ENCODE measurements at regions of chr9 and their contacts with region 1.

Region 1: DNA sequence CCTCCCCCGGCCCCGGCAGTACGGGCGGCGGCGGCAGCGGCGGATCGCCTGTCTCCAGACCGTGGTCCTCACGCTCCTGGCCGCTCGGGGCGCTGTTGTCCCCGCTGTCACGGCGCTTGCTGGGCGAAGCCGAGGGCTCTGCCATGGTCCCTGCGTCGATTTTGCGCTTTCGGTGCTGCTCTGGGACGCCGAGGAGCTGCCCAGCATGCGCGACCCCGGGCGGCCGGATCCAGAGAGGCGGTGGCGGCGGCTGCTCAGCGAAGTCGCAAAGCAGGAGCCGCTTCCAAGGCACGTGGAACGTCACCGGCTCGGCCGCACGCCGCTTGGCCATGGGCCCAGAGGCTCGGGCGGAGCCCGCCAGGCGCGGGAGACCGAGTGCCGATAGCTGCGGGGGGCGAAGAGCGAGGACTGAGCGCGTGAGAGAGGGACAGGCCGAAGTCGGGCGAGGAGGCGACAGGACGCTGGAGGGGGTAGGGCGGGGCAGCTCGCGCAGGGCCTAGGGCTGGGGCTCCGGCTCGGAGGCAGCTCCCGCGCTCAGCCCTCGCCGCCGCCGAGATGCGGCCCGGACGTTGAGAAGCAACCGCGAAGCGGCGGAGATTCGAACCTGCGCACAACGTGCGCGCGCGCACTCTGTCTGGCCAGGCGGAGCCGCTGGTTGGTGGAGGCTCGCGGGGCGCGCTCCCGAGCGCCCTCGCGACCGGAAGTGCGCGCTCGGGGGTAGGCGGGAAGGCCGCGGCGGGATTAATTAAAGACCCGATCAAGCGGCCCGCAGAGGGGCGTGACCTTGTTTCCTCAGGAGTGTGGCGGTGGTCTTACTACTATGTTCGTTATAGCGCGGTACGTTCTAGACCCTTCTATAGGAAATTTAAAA is at the start of gene C9orf40:
- DNase-seq: peak; percentile 89 to 96 (median 93)
- ATAC-seq: peak; percentile 92 to 99 (median 97)
- H3K4me3 ChIP-seq: peak within 1 kb of the TSS; percentile 50 to 94 (median 84)
- H3K27ac ChIP-seq: peak within 1 kb of the TSS; percentile 74 to 100 (median 95)
- H3K4me1 ChIP-seq: peaks cover 0 to 20% (median 0%) of the 10 kb centered on the region in 12 donors
- H3K27me3 ChIP-seq: no peaks in the 10 kb centered on the region
- CTCF ChIP-seq: peak; percentile 66 to 90 (median 83)
- POLR2A ChIP-seq: no peak
- total RNA-seq, gene C9orf40: 1.4 to 2.7 (median 1.8) TPM

Region 2: DNA sequence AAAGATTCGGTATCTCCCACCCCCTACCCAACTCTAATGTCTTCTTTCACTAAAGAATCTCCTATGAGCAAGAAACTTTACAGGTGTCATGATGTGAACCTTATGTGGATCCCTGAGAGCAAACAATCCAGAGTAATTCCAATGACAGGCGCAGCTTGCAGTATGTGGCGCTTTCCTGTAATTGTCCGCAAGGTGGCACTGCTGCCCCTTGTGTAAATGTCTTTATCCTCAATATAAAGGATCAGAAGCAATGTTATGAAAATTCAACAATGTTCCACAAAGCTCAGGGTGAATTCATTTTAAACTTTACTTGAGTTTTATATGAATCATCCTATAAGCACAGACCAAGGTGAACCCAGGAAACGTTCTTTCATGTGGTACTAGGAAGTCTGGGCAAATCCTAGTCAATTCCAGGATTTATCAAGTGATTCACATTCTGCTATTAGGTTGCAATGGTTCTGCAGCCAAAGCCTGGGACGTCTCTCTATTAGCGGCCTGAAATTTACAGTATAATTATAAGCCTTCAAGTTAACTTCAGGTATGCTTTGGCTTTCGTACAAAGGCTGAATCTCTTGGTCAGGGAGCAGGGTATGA is 178.5 kb before region 1 on chr9:
- intact Hi-C with region 1: loop called in 2 of 10 experiments (anchors 2 kb)
- DNase-seq: peak; percentile 48 to 75 (median 69)
- ATAC-seq: peak in 3 of 4 donors; percentile 75 to 83 (median 77)
- H3K4me3 ChIP-seq: no peak overlapping the region
- H3K27ac ChIP-seq: no peak overlapping the region
- H3K4me1 ChIP-seq: peaks cover 0 to 5% (median 0%) of the 10 kb centered on the region in 12 donors
- H3K27me3 ChIP-seq: peaks cover 0 to 5% (median 0%) of the 10 kb centered on the region in 9 donors
- CTCF ChIP-seq: peak; percentile 80 to 95 (median 90)
- POLR2A ChIP-seq: no peak

Region 3: DNA sequence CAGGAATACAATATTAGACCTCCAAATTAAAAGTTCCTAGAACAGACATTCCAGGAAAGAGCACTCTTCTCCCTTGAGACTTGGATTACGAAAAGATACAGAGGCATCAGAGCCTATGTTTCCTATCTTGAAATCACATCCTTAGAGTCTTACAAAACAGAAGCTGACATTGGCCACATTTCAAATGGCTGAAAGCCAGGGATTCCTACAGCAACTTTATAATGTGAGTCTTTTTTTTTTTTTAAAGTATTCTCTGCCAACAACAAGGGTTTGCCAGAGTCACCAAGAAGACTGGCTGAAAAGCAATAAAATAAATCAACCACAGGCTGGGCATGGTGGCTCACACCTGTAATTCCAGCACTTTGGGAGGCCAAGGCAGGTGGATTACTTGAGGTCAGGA is 127.9 kb before region 1 on chr9:
- intact Hi-C with region 1: loop called in 1 of 10 experiments (anchors 10 kb)
- DNase-seq: peak in 4 of 5 donors; percentile 39 to 65 (median 48)
- ATAC-seq: peak in 3 of 4 donors; percentile 50 to 80 (median 73)
- H3K4me3 ChIP-seq: no peak overlapping the region
- H3K27ac ChIP-seq: no peak overlapping the region
- H3K4me1 ChIP-seq: peaks cover 0 to 6% (median 0%) of the 10 kb centered on the region in 12 donors
- H3K27me3 ChIP-seq: no peaks in the 10 kb centered on the region
- CTCF ChIP-seq: no peak
- POLR2A ChIP-seq: no peak

Region 4: GRCh38 chr9:74887041-74887980 is 65.2 kb before region 1 on chr9 and contains the start of gene TRPM6:
- intact Hi-C with region 1: loop called in 2 of 10 experiments (anchors 5 to 10 kb)
- DNase-seq: peak; percentile 77 to 92 (median 87)
- ATAC-seq: peak; percentile 84 to 96 (median 94)
- H3K4me3 ChIP-seq: peak within 1 kb of the TSS; percentile 32 to 68 (median 62)
- H3K27ac ChIP-seq: peak within 1 kb of the TSS; percentile 66 to 84 (median 74)
- H3K4me1 ChIP-seq: peaks cover 0 to 17% (median 5%) of the 10 kb centered on the region in 12 donors
- H3K27me3 ChIP-seq: peaks cover 0 to 15% (median 6%) of the 10 kb centered on the region in 9 donors
- CTCF ChIP-seq: no peak
- POLR2A ChIP-seq: no peak
- total RNA-seq, gene TRPM6: 0.12 to 0.75 (median 0.48) TPM in 7 of 9 donors, not detected in the others

Region 5: DNA sequence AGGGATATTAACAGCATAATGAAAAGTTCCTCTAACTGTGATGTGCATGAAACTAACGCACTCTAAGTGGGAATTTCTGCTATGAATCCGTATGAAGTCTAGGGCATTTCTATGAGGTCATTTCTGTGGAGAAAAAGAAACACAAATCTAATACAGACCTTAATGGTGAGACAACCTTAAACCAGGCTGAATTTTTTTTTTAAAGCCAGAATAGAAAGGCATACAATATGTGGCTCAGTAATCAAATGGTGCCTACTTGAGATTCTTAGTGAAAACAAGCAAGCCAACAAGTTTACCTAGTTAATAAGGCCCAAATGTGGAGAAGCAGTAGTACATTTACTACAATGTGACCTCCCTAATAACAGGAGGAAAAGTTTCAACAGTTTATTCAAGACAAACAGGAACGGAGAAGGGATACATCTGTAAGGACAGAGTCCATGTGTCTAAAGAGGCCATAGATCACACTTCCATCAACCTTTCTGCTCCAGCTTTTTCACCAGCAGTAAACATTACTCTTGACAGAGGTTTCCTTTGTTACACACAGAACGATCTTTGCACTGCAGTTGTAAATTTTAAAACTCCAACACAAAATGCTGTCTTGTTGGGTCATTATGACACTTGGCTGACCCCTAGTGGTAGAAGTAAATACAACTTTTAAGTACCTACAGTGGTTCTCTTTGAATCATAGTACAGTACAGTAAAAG is 49.4 kb after region 1 on chr9:
- intact Hi-C with region 1: loop called in 4 of 10 experiments (anchors 1 to 10 kb)
- DNase-seq: peak in 1 of 5 donors; percentile 13
- ATAC-seq: peak; percentile 51 to 89 (median 77)
- H3K4me3 ChIP-seq: no peak overlapping the region
- H3K27ac ChIP-seq: no peak overlapping the region
- H3K4me1 ChIP-seq: peaks cover 0 to 4% (median 0%) of the 10 kb centered on the region in 12 donors
- H3K27me3 ChIP-seq: no peaks in the 10 kb centered on the region
- CTCF ChIP-seq: peak; percentile 58 to 86 (median 82)
- POLR2A ChIP-seq: no peak

Region 6: GRCh38 chr9:75027187-75028107 is 74.9 kb after region 1 on chr9:
- intact Hi-C with region 1: loop called in 2 of 10 experiments (anchors 2 to 5 kb)
- DNase-seq: peak; percentile 60 to 85 (median 71)
- ATAC-seq: peak; percentile 38 to 80 (median 68)
- H3K4me3 ChIP-seq: peak overlapping the region; percentile 49 to 93 (median 77)
- H3K27ac ChIP-seq: peak overlapping the region; percentile 80 to 98 (median 94)
- H3K4me1 ChIP-seq: peaks cover 0 to 28% (median 13%) of the 10 kb centered on the region in 12 donors
- H3K27me3 ChIP-seq: no peaks in the 10 kb centered on the region
- CTCF ChIP-seq: peak in 2 of 12 donors; percentile 6 to 14
- POLR2A ChIP-seq: no peak

Region 7: DNA sequence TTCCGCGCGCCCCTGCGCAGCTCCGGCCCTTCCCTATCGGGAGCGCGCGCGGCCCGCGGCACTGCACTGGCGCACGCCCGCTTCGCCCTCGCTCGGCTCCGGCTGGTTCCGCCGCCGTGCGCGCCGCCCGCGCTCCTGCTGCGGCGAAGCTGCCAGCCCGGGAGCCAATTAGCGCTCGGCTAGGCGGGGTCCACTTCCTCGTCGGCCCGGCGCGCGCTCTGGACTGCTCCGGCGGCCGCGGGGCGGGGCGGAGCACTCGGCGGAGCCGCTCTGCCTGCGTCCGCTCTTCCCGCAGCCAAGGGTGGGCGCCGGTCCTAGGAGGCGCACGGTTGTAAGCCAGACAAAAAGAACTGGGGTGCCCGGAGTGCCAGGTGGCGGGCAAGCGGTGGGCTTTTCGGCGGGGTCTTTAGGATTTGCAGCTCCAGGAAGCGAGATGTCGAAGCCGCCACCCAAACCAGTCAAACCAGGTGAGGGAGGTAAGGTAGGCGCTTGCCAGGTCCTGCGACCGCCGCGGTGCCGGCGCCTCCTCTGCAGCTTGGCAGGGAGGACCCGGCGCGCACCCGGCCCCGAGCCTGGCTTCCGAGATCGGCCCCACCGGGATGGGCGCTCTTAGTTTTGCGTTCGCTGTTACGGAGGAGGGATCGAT is 135.9 kb after region 1 on chr9 and contains the start of gene OSTF1:
- intact Hi-C with region 1: loop called in 6 of 10 experiments (anchors 5 to 10 kb)
- DNase-seq: peak; percentile 97 to 98 (median 97)
- ATAC-seq: peak; percentile 91 to 98 (median 94)
- H3K4me3 ChIP-seq: peak within 1 kb of the TSS; percentile 78 to 99 (median 95)
- H3K27ac ChIP-seq: peak within 1 kb of the TSS; percentile 81 to 99 (median 96)
- H3K4me1 ChIP-seq: peaks cover 0 to 80% (median 40%) of the 10 kb centered on the region in 12 donors
- H3K27me3 ChIP-seq: no peaks in the 10 kb centered on the region
- CTCF ChIP-seq: peak in 1 of 12 donors; percentile 23
- POLR2A ChIP-seq: peak; percentile 64 to 90
- total RNA-seq, gene OSTF1: 16.7 to 53.6 (median 23.9) TPM

Measured in heart left ventricle (tissue), 16 donors.